Activated T-helper 2 cell treated with anti-CD3 and anti-CD28 coated beads, Interferon-gamma antibody, Interleukin-2, Interleukin-4, amounts not matched to agents 10 μg/mL and 5 μg/mL and 100 μg/mL, durations not matched to agents 14 hours and 24 hours and 36 hours (primary cell): ENCODE measurements at regions of chr3 and their contacts with region 1.

Region 1: DNA sequence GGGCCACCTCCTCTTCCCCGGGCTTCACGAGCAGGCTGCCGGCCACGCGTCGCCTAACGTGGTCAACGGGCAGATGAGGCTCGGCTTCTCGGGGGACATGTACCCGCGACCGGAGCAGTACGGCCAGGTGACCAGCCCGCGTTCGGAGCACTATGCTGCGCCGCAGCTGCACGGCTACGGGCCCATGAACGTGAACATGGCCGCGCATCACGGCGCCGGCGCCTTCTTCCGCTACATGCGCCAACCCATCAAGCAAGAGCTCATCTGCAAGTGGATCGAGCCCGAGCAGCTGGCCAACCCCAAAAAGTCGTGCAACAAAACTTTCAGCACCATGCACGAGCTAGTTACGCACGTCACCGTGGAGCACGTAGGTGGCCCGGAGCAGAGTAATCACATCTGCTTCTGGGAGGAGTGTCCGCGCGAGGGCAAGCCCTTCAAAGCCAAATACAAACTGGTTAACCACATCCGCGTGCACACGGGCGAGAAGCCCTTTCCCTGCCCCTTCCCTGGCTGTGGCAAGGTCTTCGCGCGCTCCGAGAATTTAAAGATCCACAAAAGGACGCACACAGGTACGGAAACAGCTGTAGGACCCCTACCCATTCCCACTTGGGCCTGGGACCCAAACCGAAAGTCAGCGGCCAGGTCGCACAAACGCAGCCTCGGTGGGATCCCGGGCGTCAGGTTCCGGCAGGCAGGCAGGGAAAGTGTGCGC is 1.5 kb downstream of the ZIC1 start:
- DNase-seq: no peak
- H3K4me3 Mint-ChIP-seq: no peak overlapping the region
- H3K27ac Mint-ChIP-seq: peak overlapping the region; percentile 49
- H3K4me1 Mint-ChIP-seq: peaks cover 15% of the 10 kb centered on the region
- H3K27me3 Mint-ChIP-seq: peaks cover 71% of the 10 kb centered on the region

Region 2: DNA sequence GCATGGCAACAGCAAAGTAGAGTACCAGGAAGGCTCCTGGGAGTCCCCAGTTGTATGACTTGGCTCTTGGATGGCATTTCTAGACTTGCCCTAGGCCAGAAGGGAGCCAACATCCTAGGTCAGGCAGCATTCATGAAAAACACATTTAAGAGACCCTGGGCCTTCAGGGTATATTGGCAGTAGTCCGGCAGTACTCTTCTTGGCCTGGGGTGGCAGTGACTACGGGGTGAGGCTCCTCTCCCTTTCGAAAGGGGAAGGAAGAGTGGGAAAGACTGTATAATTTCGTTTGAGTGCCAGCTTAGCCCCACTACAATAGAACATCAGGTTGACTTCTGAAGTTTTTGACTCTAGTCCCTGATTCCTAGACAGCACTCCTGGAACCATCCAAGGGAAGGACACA is 140.8 kb before region 1 on chr3:
- intact Hi-C with region 1: no loop called
- DNase-seq: no peak
- H3K4me3 Mint-ChIP-seq: no peak overlapping the region
- H3K27ac Mint-ChIP-seq: no peak overlapping the region
- H3K4me1 Mint-ChIP-seq: no peaks in the 10 kb centered on the region
- H3K27me3 Mint-ChIP-seq: no peaks in the 10 kb centered on the region

Region 3: DNA sequence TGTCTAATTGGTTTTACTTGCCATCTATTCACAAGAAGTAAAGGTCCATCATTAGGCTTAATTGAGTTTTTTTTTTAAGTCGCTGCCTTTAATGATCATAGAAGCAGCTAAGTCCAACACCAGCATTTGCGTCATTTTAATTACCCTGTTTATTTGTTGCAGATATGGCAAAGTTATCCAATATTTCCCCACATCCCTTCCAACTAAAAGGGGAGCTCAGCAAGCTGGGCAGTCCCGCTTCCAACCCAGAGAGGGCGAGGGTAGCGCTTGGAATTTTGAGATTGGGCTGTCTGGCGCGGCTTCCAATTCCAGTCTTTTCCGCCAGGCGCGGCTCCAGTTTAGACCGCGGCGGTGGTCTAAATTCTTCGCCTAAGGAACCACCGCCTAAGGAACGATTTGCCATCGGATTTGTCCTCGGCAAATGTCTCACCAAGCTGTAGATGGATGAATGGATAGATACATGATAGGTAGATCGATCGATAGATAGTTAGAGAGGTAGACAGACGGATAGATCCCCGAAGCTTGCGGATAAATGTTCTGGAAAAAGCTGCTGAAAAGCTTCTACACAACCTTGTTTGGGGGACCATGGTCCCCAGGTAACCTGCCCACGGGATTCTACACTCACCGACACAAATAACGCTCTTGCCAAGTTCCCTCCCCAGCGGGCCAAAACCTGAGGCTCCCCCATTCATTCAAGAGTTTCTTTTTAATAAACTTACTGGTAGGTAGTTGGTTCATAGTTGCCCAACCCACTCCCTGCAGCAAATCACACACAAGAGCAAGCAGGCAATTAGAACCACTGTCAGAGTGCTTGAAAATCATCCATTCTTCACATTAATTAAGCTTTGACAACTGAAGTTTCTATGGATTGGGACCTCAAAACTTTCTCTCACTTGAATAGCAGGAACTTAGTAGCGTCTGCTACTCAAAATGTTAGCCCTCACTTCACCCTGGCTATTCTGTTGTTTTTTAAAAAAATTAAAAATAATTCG is 53.5 kb before region 1 on chr3:
- intact Hi-C with region 1: loop called (anchors 1 kb)
- DNase-seq: no peak
- H3K4me3 Mint-ChIP-seq: no peak overlapping the region
- H3K27ac Mint-ChIP-seq: no peak overlapping the region
- H3K4me1 Mint-ChIP-seq: no peaks in the 10 kb centered on the region
- H3K27me3 Mint-ChIP-seq: peaks cover 76% of the 10 kb centered on the region

Region 4: DNA sequence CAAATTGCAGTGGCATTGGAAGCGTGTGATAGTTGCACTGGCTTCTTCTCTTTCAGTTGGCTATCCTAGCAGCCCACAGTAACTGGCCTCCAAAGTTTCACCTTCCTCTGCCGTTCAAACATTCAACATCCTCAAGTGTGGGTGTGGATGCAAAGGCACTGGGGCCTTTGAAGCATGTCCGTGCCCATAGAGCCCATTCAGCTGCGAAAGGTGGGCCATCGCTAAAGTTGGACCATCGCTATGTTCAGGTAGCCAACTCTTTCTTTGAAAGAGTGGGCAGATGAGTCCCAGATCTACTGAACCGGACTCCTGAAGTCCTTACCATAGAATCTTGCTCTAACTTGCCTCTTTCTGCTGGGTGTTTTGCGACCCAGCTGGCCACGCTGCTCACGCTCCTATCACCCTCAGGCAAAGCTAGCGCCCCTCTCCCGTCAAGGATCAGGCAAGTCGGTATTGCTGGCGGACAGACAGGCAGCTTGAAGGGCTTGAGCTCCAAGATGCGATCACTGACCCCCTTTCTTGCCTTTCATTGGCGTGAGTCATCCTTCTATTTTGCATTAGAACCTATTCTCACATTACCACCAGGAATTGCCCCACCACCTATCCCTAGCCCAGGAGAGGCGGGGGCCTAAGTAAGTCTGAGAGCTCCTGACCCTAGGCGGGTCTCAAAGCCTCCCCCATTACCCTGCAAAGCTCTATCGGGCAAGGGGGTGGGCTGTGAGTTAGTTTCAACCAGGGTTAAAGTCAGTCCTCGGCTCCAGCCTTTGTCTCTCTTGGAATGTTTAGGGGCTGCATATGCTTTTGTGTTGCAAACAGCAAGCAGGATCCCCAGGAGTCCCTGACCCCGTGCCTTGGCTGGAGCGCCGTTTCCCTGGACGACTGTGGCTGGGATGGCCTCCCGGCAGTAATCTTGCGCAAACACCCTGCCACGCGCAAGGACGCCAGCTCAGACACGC is 33.0 kb before region 1 on chr3:
- intact Hi-C with region 1: loop called (anchors 5 kb)
- DNase-seq: no peak
- H3K4me3 Mint-ChIP-seq: no peak overlapping the region
- H3K27ac Mint-ChIP-seq: no peak overlapping the region
- H3K4me1 Mint-ChIP-seq: no peaks in the 10 kb centered on the region
- H3K27me3 Mint-ChIP-seq: peaks cover 63% of the 10 kb centered on the region

Region 5: GRCh38 chr3:147389717-147390116 is 21.0 kb before region 1 on chr3:
- intact Hi-C with region 1: loop called (anchors 2 kb)
- DNase-seq: no peak
- H3K4me3 Mint-ChIP-seq: no peak overlapping the region
- H3K27ac Mint-ChIP-seq: no peak overlapping the region
- H3K4me1 Mint-ChIP-seq: no peaks in the 10 kb centered on the region
- H3K27me3 Mint-ChIP-seq: peaks cover 75% of the 10 kb centered on the region

Region 6: DNA sequence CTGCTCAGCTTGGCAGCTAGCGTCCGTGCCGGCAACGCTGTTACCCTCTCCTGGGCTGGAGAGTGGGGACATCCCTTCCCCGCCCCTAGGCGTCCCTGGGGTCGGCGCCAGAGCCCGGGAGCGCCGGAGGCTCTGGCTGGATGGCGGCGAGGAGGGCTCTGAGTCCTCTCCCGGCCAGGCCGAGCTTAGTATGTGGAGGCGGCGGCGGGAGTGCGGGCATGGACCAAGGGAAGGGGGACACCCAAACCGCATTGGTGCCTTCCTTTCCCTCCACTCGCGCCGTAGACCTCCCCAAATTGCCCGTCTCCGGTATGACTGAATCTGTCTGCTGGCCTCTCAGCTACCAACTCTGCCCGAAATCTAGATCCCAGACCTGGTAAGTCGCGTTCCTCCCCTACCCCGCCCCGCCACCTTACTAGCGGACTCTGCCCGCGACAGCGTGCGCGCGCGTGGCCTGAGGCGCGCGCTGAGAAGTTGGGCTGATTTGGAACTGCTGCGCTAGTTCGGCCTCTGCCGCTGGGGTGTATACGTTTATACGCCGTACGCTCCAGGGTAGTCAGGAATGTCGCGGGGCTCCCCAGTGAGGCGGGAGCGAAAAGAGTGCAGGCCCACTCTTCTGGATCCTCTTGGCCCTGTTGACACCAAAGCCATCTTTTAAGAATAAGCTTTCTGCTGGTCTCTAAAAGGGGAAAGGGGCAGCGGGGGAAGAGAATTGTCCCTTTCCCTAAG is 10.7 kb after region 1 on chr3:
- intact Hi-C with region 1: loop called (anchors 1 kb)
- DNase-seq: no peak
- H3K4me3 Mint-ChIP-seq: no peak overlapping the region
- H3K27ac Mint-ChIP-seq: no peak overlapping the region
- H3K4me1 Mint-ChIP-seq: no peaks in the 10 kb centered on the region
- H3K27me3 Mint-ChIP-seq: peaks cover 72% of the 10 kb centered on the region